ENCODE measurements at regions of chr5 and their contacts with region 1.

Region 1: DNA sequence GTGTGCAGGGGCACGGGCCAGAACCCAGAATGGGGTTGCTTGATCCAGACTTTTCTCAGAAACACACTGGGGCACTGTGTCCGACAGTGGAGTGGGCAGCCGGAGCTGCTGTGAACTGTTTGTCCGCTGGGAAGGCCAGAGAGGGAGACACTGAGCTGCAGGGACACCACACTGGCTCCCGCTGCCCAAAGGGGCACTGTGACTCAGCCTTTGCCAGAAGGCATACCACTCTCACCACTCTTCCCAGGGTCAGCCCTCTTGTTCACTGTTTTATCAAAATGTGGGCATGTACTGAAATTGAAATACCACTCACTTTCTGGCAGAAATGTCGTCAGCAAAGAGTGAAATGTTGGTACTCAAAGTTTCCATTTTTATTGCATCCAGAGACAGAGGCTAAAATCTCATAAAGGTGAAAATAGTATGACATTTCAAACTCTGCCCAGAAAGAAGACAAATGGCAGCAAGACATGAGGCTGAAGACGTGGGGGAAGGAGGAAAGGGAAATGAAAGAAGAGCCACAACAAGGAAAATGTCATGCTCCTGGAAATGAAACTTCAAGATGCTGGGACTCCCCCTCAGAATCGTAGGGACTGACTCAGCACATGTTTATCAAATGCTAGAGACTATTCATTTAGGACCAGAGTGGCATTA is 4.5 kb upstream of the IL7R start:
- DNase-seq: no peak
- H3K4me3 Mint-ChIP-seq: peak overlapping the region; percentile 85
- H3K27ac Mint-ChIP-seq: peak overlapping the region; percentile 96
- H3K4me1 Mint-ChIP-seq: peaks cover 61% of the 10 kb centered on the region
- H3K27me3 Mint-ChIP-seq: no peaks in the 10 kb centered on the region

Region 2: DNA sequence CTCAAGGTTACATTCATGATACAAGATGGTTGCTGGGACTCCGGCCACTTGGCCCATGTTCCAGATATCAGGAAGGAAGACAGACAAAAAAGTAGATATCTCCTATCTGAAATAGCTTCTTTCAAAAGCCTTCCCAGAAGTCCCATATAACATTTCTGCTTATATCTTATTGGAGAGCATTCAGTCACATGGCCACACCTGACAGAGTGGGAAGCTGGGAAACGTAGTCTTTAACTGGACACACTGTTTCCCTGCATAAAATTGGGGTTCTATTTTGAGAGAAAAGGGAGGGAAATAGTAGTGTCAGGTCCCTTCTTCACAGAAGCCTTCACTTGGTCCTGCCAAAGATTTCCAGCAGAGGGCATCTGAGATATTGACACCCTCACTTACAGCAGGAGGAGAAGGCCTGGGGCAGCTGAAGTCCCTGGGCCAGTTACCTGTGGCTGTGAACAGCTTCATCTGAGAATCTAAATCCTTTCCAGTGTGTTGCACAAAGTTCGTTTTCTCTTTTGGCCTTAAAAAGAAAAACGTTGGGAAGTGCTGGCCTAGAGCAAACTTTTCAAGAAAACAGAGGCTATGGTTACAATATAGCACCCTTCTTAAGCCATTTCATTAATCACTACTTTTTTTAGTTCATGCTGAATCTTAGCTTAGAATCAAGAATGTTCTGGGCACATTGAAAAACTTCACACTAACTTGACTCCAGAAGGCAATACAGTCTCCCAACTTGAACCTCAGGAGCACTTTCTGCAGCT is 201.0 kb before region 1 on chr5:
- intact Hi-C with region 1: loop called (anchors 2 kb)
- DNase-seq: peak; percentile 46
- H3K4me3 Mint-ChIP-seq: no peak overlapping the region
- H3K27ac Mint-ChIP-seq: no peak overlapping the region
- H3K4me1 Mint-ChIP-seq: peaks cover 11% of the 10 kb centered on the region
- H3K27me3 Mint-ChIP-seq: no peaks in the 10 kb centered on the region

Region 3: DNA sequence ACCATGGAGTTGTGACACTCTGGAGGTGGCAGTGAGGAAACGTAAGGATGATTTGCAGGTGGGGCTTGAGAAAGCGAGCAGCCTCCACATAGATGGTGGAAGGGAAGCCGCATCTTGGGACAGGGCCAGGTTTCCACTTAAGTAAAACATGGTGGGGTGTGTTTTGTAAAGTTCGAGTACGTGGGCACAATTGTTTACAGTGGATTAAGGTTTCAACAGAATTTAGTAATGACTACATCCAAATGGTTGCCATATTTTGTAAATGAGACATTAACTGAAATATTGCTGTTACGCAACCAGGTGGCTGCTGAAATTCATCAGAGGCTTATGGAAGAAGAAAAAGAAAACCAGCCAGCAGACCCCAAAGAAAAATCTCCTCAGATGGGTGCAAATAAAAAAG is 80.9 kb before region 1 on chr5:
- intact Hi-C with region 1: loop called (anchors 2 kb)
- DNase-seq: no peak
- H3K4me3 Mint-ChIP-seq: no peak overlapping the region
- H3K27ac Mint-ChIP-seq: no peak overlapping the region
- H3K4me1 Mint-ChIP-seq: peaks cover 33% of the 10 kb centered on the region
- H3K27me3 Mint-ChIP-seq: no peaks in the 10 kb centered on the region

Region 4: GRCh38 chr5:35832762-35833161 is 19.4 kb before region 1 on chr5:
- intact Hi-C with region 1: loop called (anchors 1 kb)
- DNase-seq: no peak
- H3K4me3 Mint-ChIP-seq: no peak overlapping the region
- H3K27ac Mint-ChIP-seq: peak overlapping the region; percentile 77
- H3K4me1 Mint-ChIP-seq: peaks cover 77% of the 10 kb centered on the region
- H3K27me3 Mint-ChIP-seq: no peaks in the 10 kb centered on the region

Region 5: GRCh38 chr5:35908228-35908627 is 56.0 kb after region 1 on chr5:
- intact Hi-C with region 1: loop called (anchors 1 kb)
- DNase-seq: no peak
- H3K4me3 Mint-ChIP-seq: no peak overlapping the region
- H3K27ac Mint-ChIP-seq: peak overlapping the region; percentile 89
- H3K4me1 Mint-ChIP-seq: peaks cover 61% of the 10 kb centered on the region
- H3K27me3 Mint-ChIP-seq: no peaks in the 10 kb centered on the region

Region 6: GRCh38 chr5:36337597-36337996 is 485.4 kb after region 1 on chr5:
- intact Hi-C with region 1: no loop called
- DNase-seq: no peak
- H3K4me3 Mint-ChIP-seq: no peak overlapping the region
- H3K27ac Mint-ChIP-seq: no peak overlapping the region
- H3K4me1 Mint-ChIP-seq: no peaks in the 10 kb centered on the region
- H3K27me3 Mint-ChIP-seq: peaks cover 3% of the 10 kb centered on the region

Measured in activated T-helper 2 cell treated with anti-CD3 and anti-CD28 coated beads, Interferon-gamma antibody, Interleukin-2, Interleukin-4, amounts not matched to agents 10 μg/mL and 5 μg/mL and 100 μg/mL, durations not matched to agents 14 hours and 24 hours and 36 hours (primary cell).